ENCODE measurements at regions of chr5 and their contacts with region 1.

Region 1: GRCh38 chr5:143586781-143587362 is 183.4 kb upstream of the NR3C1 start:
- DNase-seq: no peak
- H3K4me3 ChIP-seq: no peak overlapping the region
- H3K4me3 Mint-ChIP-seq: no peak overlapping the region
- H3K27ac ChIP-seq: no peak overlapping the region
- H3K27ac Mint-ChIP-seq: peak overlapping the region in 1 of 8 donors; percentile 21
- H3K4me1 ChIP-seq: no peaks in the 10 kb centered on the region
- H3K4me1 Mint-ChIP-seq: peaks cover 20 to 27% (median 25%) of the 10 kb centered on the region in 3 donors
- H3K27me3 ChIP-seq: no peaks in the 10 kb centered on the region
- H3K27me3 Mint-ChIP-seq: peaks cover 0 to 3% of the 10 kb centered on the region in 2 donors

Region 2: GRCh38 chr5:142976861-142977260 is 610.0 kb before region 1 on chr5:
- CTCF ChIA-PET with region 1: no interaction called
- POLR2A ChIA-PET with region 1: interaction called, 14 read pairs
- DNase-seq: no peak
- H3K4me3 ChIP-seq: no peak overlapping the region
- H3K4me3 Mint-ChIP-seq: peak overlapping the region in 6 of 7 donors; percentile 61 to 86 (median 77)
- H3K27ac ChIP-seq: peak overlapping the region; percentile 44
- H3K27ac Mint-ChIP-seq: peak overlapping the region; percentile 90 to 98 (median 96)
- H3K4me1 ChIP-seq: peaks cover 83% of the 10 kb centered on the region
- H3K4me1 Mint-ChIP-seq: peaks cover 95 to 98% (median 96%) of the 10 kb centered on the region in 3 donors
- H3K27me3 ChIP-seq: no peaks in the 10 kb centered on the region
- H3K27me3 Mint-ChIP-seq: no peaks in the 10 kb centered on the region

Region 3: GRCh38 chr5:144405991-144406390 is 819.1 kb after region 1 on chr5:
- CTCF ChIA-PET with region 1: no interaction called
- POLR2A ChIA-PET with region 1: no interaction called
- DNase-seq: no peak
- H3K4me3 ChIP-seq: no peak overlapping the region
- H3K4me3 Mint-ChIP-seq: no peak overlapping the region
- H3K27ac ChIP-seq: no peak overlapping the region
- H3K27ac Mint-ChIP-seq: no peak overlapping the region
- H3K4me1 ChIP-seq: no peaks in the 10 kb centered on the region
- H3K4me1 Mint-ChIP-seq: no peaks in the 10 kb centered on the region
- H3K27me3 ChIP-seq: no peaks in the 10 kb centered on the region
- H3K27me3 Mint-ChIP-seq: peaks cover 0 to 4% of the 10 kb centered on the region in 2 donors